Breast epithelium (tissue), 4 donors: ENCODE measurements at regions of chr15 and their contacts with region 1.

Region 1: GRCh38 chr15:98051734-98052133 is 91.2 kb downstream of the ARRDC4 start:
- DNase-seq: no peak
- H3K4me3 ChIP-seq: no peak overlapping the region
- H3K27ac ChIP-seq: no peak overlapping the region
- H3K4me1 ChIP-seq: no peaks in the 10 kb centered on the region
- H3K27me3 ChIP-seq: no peaks in the 10 kb centered on the region
- CTCF ChIP-seq: no peak
- POLR2A ChIP-seq: no peak

Region 2: DNA sequence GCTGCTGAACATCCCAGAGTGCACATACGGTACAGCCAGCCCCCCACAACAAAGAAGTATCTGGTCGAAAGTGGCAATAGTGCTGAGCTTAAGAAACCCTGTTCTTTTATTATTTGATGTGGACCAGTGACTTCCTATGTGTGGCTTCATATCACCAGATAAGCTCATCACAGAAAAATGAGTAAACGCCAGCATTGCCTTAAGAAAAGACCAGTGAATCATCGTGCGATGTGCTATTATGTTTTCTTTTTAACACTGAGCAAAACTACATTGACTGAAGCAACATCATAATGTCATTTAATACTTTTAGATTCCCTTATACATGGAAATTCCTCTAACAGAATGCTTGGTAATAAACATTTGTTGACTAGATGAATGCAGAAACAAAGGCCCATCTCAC is 136.5 kb before region 1 on chr15:
- intact Hi-C with region 1: loop called (anchors 10 kb)
- DNase-seq: no peak
- H3K4me3 ChIP-seq: no peak overlapping the region
- H3K27ac ChIP-seq: no peak overlapping the region
- H3K4me1 ChIP-seq: no peaks in the 10 kb centered on the region
- H3K27me3 ChIP-seq: no peaks in the 10 kb centered on the region
- CTCF ChIP-seq: no peak
- POLR2A ChIP-seq: no peak

Region 3: DNA sequence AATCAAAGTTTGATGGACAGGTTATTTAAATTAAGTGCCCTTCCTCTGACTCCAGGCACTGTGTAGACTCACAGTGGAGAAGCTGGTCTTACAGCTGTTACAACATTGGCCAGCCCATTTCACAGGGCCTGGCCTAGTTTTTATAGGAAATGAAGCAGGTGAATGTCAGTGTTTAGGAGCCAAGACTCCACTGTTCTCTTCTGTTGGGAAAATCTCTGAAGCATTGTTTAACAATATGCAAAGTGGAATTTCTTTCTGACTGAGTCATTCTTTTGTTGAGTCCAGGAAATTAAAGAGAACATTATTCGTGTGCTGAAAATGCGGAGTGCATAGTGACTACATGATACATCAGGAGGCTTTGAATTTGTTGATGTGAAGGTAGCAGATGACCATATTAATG is 26.5 kb before region 1 on chr15:
- intact Hi-C with region 1: no loop called
- DNase-seq: no peak
- H3K4me3 ChIP-seq: no peak overlapping the region
- H3K27ac ChIP-seq: no peak overlapping the region
- H3K4me1 ChIP-seq: no peaks in the 10 kb centered on the region
- H3K27me3 ChIP-seq: no peaks in the 10 kb centered on the region
- CTCF ChIP-seq: no peak
- POLR2A ChIP-seq: no peak